ENCODE measurements at regions of chr11 and their contacts with region 1.

Region 1: GRCh38 chr11:123307276-123307675 is 112.2 kb upstream of the CLMP start:
- DNase-seq: no peak
- ATAC-seq: no peak
- H3K4me3 ChIP-seq: no peak overlapping the region
- H3K27ac ChIP-seq: no peak overlapping the region
- H3K4me1 ChIP-seq: peaks cover 0 to 4% of the 10 kb centered on the region in 2 experiments; a peak in 1 of 4 replicates
- H3K27me3 ChIP-seq: 0 out of 2 replicates have a peak, but pooled peaks cover 4% of the 10 kb centered on the region
- CTCF ChIP-seq: no peak
- POLR2A ChIP-seq: no peak
- RAD21 ChIP-seq: no peak

Region 2: GRCh38 chr11:123351375-123351774 is 44.1 kb after region 1 on chr11:
- CTCF ChIA-PET with region 1: no interaction called
- POLR2A ChIA-PET with region 1: no interaction called
- RAD21 ChIA-PET with region 1: no interaction called
- intact Hi-C with region 1: loop called (anchors 2 kb)
- DNase-seq: no peak
- ATAC-seq: no peak
- H3K4me3 ChIP-seq: no peak overlapping the region
- H3K27ac ChIP-seq: no peak overlapping the region
- H3K4me1 ChIP-seq: no peaks in the 10 kb centered on the region
- H3K27me3 ChIP-seq: no peaks in the 10 kb centered on the region
- CTCF ChIP-seq: no peak
- POLR2A ChIP-seq: no peak
- RAD21 ChIP-seq: no peak

Region 3: DNA sequence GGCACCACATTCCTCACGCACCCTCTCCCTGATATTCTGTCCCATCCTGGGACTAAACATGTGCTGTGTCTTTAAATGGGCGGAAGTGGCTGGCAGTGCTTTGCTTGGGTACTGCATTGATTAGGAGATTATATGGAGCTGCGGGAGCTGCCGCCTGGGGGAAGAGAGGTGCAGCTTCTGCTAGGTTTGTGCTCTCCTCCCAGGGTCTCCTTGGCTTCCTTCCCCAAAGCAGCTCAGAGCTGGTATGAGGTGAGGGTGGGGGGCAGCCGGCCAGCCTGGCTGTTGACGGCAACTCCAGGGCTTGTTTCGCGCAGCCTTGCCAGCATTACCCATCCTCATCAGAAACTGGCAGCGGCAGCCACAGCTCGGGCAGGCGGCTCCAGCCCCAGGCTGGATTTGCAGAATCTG is 218.2 kb after region 1 on chr11:
- CTCF ChIA-PET with region 1: no interaction called
- POLR2A ChIA-PET with region 1: no interaction called
- RAD21 ChIA-PET with region 1: no interaction called
- intact Hi-C with region 1: no loop called
- DNase-seq: no peak
- ATAC-seq: no peak
- H3K4me3 ChIP-seq: no peak overlapping the region
- H3K27ac ChIP-seq: no peak overlapping the region
- H3K4me1 ChIP-seq: no peaks in the 10 kb centered on the region
- H3K27me3 ChIP-seq: no peaks in the 10 kb centered on the region
- CTCF ChIP-seq: no peak
- POLR2A ChIP-seq: no peak
- RAD21 ChIP-seq: no peak